ENCODE measurements at regions of chr7 and their contacts with region 1.

Region 1: DNA sequence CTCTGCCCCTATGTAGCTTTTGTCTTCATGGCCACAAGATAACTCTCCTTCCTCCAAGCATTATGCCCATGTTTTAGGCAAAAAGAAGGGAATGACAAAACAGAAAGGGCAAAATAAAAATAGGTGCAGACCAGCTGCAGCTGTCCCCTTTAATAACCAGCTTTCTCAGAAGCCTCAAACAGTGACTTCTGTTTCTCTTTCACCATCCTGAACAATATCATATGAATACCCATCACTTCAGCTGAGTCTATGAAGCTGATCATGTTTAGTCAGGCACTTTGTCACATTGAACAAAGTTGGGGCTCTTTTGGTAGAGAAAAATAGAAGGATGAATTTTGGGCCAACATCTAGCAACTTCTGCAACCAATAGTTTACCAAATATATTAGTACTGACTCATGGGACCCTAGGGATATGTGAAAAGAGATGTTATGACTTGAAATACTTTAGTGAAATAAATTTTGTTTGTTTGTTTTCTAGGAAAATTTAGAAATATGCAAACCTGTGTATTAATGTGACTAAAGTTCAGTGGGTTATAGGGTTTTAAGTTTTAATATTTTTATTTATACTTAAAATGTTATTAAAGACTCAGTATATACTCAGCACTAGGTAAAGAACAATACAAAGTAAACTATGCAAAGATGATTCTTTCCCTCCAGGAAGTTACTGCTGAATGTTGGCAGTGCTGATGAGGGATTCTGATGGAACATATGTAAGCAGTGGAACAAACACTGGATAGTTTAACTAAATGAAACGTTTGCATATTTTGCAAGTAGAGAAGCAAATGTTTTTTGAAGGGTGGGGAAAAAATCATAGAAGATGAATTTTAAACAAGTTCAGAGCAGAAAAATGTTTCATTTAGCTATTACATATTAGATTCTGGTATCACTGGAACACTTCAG is 133.7 kb downstream of the FOXP2 start:
- DNase-seq: no peak
- ATAC-seq: no peak
- H3K4me3 ChIP-seq: no peak overlapping the region
- H3K27ac ChIP-seq: no peak overlapping the region
- H3K4me1 ChIP-seq: no peaks in the 10 kb centered on the region
- H3K27me3 ChIP-seq: no peaks in the 10 kb centered on the region
- CTCF ChIP-seq: no peak

Region 2: DNA sequence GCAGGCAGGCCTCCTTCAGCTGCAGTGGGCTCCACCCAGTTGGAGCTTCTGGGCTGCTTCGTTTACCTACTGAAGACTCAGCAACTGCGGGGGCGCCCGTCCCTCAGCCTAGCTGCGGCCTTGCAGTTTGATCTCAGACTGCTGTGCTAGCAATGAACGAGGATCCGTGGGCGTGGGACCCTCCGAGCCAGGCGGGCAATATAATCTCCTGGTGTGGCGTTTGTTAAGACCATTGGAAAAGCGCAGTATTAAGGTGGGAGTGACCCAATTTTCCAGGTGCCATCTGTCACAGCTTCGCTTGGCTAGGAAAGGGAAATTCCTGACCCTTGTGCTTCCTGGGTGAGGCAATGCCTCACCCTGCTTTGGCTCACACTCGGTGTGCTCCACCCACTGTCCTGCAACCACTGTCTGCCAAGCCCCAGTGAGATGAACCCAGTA is 292.9 kb before region 1 on chr7:
- CTCF ChIA-PET with region 1: no interaction called
- POLR2A ChIA-PET with region 1: no interaction called
- in situ Hi-C with region 1: no loop called
- intact Hi-C with region 1: loop called (anchors 10 kb)
- DNase-seq: no peak
- ATAC-seq: no peak
- H3K4me3 ChIP-seq: no peak overlapping the region
- H3K27ac ChIP-seq: no peak overlapping the region
- H3K4me1 ChIP-seq: no peaks in the 10 kb centered on the region
- H3K27me3 ChIP-seq: no peaks in the 10 kb centered on the region
- CTCF ChIP-seq: no peak

Measured in Panc1 (cell line).